ENCODE measurements at regions of chr3 and their contacts with region 1.

Region 1: GRCh38 chr3:176939022-176939817 is 258.1 kb downstream of the TBL1XR1 start:
- DNase-seq: peak; percentile 26
- H3K4me3 Mint-ChIP-seq: no peak overlapping the region
- H3K27ac Mint-ChIP-seq: no peak overlapping the region
- H3K4me1 Mint-ChIP-seq: no peaks in the 10 kb centered on the region
- H3K27me3 Mint-ChIP-seq: peaks cover 6% of the 10 kb centered on the region

Region 2: GRCh38 chr3:176514297-176514696 is 424.9 kb before region 1 on chr3:
- CTCF ChIA-PET with region 1: no interaction called
- POLR2A ChIA-PET with region 1: no interaction called
- intact Hi-C with region 1: loop called (anchors 2 kb)
- DNase-seq: peak; percentile 12
- H3K4me3 Mint-ChIP-seq: no peak overlapping the region
- H3K27ac Mint-ChIP-seq: no peak overlapping the region
- H3K4me1 Mint-ChIP-seq: no peaks in the 10 kb centered on the region
- H3K27me3 Mint-ChIP-seq: no peaks in the 10 kb centered on the region

Region 3: DNA sequence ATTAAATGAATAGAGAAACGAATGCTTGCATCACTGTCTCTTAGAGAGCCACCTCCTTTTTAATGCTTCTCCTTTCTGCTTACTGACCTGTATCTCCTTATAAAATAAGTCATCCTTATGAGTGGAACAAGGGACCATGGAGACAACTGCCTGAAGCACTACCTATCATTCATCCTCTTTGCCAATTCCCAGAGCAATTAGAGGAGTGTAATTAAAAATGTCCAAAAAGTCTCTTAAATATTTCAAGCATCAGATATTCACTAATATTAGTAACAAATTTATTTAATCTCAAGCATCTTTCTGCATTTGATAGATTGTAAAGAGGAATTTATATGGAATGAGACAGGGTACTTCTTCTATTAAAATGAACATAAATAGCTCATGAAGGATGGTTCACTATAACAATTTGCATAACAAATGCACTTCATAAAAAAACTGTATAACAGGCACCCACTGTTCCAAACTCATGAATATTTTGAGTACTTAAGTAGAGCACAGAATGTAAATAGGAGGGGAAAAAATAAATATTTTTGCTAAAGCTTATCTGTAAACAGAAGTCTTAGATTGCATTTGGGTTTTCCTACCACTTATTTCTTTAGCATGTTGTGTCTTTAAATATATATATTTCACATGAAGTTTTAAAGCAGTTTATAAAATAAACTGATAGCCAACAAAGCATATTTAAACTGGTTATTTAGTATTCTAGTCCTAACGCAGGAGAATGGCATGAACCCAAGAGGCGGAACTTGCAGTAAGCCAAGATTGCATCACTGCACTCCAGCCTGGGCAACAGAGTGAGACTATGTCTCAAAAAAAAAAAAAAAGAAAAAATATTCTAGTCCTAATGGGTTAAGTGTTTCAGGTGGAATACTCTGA is 11.3 kb before region 1 on chr3:
- CTCF ChIA-PET with region 1: interaction called, 15 read pairs
- POLR2A ChIA-PET with region 1: no interaction called
- intact Hi-C with region 1: no loop called
- DNase-seq: no peak
- H3K4me3 Mint-ChIP-seq: no peak overlapping the region
- H3K27ac Mint-ChIP-seq: no peak overlapping the region
- H3K4me1 Mint-ChIP-seq: peaks cover 2% of the 10 kb centered on the region
- H3K27me3 Mint-ChIP-seq: peaks cover 16% of the 10 kb centered on the region